ENCODE measurements at regions of chr1 and their contacts with region 1.

Region 1: GRCh38 chr1:110312188-110313121 is 26.7 kb upstream of the RBM15 start:
- DNase-seq: peak; percentile 58 to 66
- ATAC-seq: peak; percentile 92 to 95
- H3K4me3 ChIP-seq: no peak overlapping the region
- H3K27ac ChIP-seq: no peak overlapping the region
- H3K4me1 ChIP-seq: peaks cover 4 to 5% of the 10 kb centered on the region in 2 donors
- H3K27me3 ChIP-seq: no peaks in the 10 kb centered on the region
- CTCF ChIP-seq: peak; percentile 76 to 95 (median 90)
- POLR2A ChIP-seq: no peak

Region 2: GRCh38 chr1:109783429-109783831 is 529.0 kb before region 1 on chr1:
- in situ Hi-C with region 1: no loop called
- intact Hi-C with region 1: no loop called
- DNase-seq: no peak
- ATAC-seq: peak in 1 of 2 donors; percentile 30
- H3K4me3 ChIP-seq: no peak overlapping the region
- H3K27ac ChIP-seq: no peak overlapping the region
- H3K4me1 ChIP-seq: peaks cover 0 to 8% of the 10 kb centered on the region in 2 donors
- H3K27me3 ChIP-seq: no peaks in the 10 kb centered on the region
- CTCF ChIP-seq: no peak
- POLR2A ChIP-seq: no peak

Region 3: GRCh38 chr1:110188035-110188618 is 124.3 kb before region 1 on chr1:
- in situ Hi-C with region 1: no loop called
- intact Hi-C with region 1: no loop called
- DNase-seq: peak; percentile 16 to 29
- ATAC-seq: peak; percentile 72 to 90
- H3K4me3 ChIP-seq: no peak overlapping the region
- H3K27ac ChIP-seq: peak overlapping the region; percentile 48 to 58 (median 54)
- H3K4me1 ChIP-seq: peaks cover 12 to 33% of the 10 kb centered on the region in 2 donors
- H3K27me3 ChIP-seq: no peaks in the 10 kb centered on the region
- CTCF ChIP-seq: no peak
- POLR2A ChIP-seq: no peak

Region 4: DNA sequence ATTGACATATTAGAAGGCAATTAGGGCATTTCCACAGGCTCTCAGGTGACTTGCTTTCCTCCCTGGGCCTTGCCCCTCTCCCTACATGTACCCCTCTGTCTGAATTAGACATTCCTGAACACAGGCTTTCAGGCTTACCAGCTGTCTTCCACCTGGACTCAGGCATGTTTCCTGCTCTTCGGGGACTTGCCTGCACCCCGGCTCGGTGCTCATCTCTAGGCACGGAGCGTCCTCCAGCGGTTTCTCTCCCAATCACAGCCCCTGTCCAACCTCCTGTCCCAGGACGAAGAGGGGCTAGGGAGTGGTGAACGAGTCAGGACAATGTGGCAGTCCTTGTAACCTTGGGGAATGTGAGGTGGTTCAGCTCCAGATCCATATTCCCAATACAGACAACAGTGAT is 142.7 kb after region 1 on chr1:
- in situ Hi-C with region 1: loop called (anchors 5 to 10 kb)
- intact Hi-C with region 1: loop called (anchors 2 kb)
- DNase-seq: no peak
- ATAC-seq: no peak
- H3K4me3 ChIP-seq: no peak overlapping the region
- H3K27ac ChIP-seq: no peak overlapping the region
- H3K4me1 ChIP-seq: no peaks in the 10 kb centered on the region
- H3K27me3 ChIP-seq: peaks cover 0 to 3% (median 0%) of the 10 kb centered on the region in 3 donors
- CTCF ChIP-seq: no peak
- POLR2A ChIP-seq: no peak

Region 5: DNA sequence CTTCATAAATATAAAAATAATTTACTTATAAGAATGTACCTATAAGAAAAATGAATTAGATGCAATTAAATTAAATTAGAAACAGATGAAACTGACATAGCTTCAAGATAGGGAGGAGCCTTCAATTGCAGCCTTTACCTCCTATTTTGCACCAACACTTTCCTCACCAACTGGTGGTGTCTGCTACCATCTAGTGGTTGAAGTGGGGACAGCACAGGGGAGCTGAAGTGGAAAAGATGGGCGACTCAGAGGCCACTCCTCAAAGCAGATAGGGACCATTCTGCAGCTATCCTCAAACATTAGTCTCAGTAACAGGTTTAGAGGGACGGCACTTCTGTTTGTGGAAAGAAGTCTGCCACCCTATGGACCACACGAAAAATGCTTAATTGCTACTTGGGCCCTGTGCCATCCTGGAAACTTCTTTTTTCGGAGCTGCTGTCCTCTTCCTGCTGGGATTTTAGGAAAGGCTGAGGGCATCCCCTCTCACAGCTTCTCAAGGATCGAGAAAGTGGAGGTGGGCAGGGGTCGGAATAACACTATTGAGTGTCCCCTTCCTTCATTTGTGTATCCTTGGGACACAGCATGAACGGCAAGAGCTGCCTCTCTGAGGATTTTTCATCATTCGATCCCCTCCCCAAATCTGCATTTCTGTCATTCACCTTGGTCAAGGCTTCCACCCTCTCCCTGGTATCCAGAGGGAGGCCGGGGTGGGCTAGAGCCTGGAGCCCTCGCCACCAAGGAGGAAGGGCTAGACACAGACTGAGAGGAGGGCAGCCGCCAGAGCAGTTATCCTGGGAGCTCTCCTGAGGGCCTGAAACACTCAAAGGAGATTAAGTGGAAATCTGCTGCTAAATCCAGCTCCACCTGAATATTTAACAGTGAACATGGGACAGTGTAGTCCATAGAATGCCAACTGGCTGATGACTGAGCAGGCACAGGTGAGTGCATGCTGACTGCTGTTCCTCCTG is 148.1 kb after region 1 on chr1:
- in situ Hi-C with region 1: loop called (anchors 5 to 10 kb)
- intact Hi-C with region 1: loop called (anchors 2 kb)
- DNase-seq: peak; percentile 54 to 68
- ATAC-seq: peak; percentile 93 to 95
- H3K4me3 ChIP-seq: no peak overlapping the region
- H3K27ac ChIP-seq: no peak overlapping the region
- H3K4me1 ChIP-seq: no peaks in the 10 kb centered on the region
- H3K27me3 ChIP-seq: no peaks in the 10 kb centered on the region
- CTCF ChIP-seq: peak; percentile 89 to 96 (median 94)
- POLR2A ChIP-seq: no peak

Measured in gastrocnemius medialis (tissue), 4 donors.